Ascending aorta (tissue), 2 donors: ENCODE measurements at regions of chr12 and their contacts with region 1.

Region 1: GRCh38 chr12:91274916-91275315 is 92.3 kb upstream of the DCN start:
- DNase-seq: no peak
- H3K4me3 ChIP-seq: peak overlapping the region in 1 of 2 donors; percentile 1
- H3K27ac ChIP-seq: peak overlapping the region; percentile 62
- H3K4me1 ChIP-seq: peaks cover 0 to 5% of the 10 kb centered on the region in 2 donors
- H3K27me3 ChIP-seq: no peaks in the 10 kb centered on the region
- CTCF ChIP-seq: no peak

Region 2: GRCh38 chr12:91240386-91241095 is 34.4 kb before region 1 on chr12:
- intact Hi-C with region 1: loop called (anchors 5 kb)
- DNase-seq: no peak
- H3K4me3 ChIP-seq: no peak overlapping the region
- H3K27ac ChIP-seq: peak overlapping the region in 1 of 2 donors; percentile 4
- H3K4me1 ChIP-seq: peaks cover 0 to 12% of the 10 kb centered on the region in 2 donors
- H3K27me3 ChIP-seq: no peaks in the 10 kb centered on the region
- CTCF ChIP-seq: no peak